Esophagus squamous epithelium (tissue), 5 donors: ENCODE measurements at regions of chr1 and their contacts with region 1.

Region 1: DNA sequence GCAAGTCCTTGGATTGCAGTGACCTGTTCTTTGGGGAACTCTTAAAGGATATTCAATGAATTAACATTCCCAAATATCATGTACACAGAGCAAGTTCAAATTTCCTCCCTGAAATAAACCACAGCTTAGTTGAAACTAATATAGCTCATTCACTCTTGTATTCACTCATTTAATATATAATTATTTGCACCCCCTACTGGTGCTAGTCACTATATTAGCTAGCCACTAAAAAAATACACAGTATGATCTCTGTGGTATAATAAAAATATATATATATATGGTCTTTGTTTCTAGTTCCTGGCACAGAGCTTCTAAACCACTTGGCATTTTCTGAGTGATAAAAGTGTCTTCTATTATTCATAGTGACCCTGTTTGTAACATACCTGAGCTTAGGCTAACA is 177.3 kb upstream of the LYPLAL1 start:
- DNase-seq: no peak
- H3K4me3 ChIP-seq: no peak overlapping the region
- H3K27ac ChIP-seq: no peak overlapping the region
- H3K4me1 ChIP-seq: no peaks in the 10 kb centered on the region
- H3K27me3 ChIP-seq: no peaks in the 10 kb centered on the region
- CTCF ChIP-seq: peak in 1 of 6 experiments; percentile 34
- POLR2A ChIP-seq: no peak

Region 2: DNA sequence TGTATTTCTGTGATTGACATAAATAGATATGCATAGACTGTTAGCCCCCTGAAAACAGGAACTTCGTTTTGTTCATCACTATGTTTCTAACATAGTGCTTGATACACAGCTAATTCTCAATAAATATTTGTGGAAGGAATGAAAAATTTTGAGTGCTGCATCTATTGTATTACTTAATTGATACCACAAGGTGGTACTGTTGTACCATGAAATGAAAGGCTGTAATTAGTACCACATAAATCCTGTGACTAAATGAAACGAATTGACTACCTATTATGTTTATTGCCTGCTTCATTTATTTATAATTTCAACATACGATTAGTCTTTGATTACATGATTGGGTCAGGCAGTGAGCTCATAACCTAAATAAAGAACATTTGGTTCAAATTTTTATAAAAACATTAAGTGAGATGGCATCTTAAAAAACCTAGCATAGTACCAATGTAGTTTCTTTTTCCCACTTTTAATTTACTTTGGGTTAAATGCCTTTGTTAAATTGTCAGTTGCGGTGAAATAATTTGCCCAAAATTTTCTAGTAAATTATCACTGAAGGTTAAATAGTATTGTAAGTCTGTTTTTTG is 666.2 kb before region 1 on chr1:
- intact Hi-C with region 1: loop called (anchors 10 kb)
- DNase-seq: no peak
- H3K4me3 ChIP-seq: no peak overlapping the region
- H3K27ac ChIP-seq: no peak overlapping the region
- H3K4me1 ChIP-seq: no peaks in the 10 kb centered on the region
- H3K27me3 ChIP-seq: no peaks in the 10 kb centered on the region
- CTCF ChIP-seq: peak; percentile 13 to 79 (median 62)
- POLR2A ChIP-seq: no peak